Heart left ventricle (tissue), 16 donors: ENCODE measurements at regions of chr1 and their contacts with region 1.

Region 1: DNA sequence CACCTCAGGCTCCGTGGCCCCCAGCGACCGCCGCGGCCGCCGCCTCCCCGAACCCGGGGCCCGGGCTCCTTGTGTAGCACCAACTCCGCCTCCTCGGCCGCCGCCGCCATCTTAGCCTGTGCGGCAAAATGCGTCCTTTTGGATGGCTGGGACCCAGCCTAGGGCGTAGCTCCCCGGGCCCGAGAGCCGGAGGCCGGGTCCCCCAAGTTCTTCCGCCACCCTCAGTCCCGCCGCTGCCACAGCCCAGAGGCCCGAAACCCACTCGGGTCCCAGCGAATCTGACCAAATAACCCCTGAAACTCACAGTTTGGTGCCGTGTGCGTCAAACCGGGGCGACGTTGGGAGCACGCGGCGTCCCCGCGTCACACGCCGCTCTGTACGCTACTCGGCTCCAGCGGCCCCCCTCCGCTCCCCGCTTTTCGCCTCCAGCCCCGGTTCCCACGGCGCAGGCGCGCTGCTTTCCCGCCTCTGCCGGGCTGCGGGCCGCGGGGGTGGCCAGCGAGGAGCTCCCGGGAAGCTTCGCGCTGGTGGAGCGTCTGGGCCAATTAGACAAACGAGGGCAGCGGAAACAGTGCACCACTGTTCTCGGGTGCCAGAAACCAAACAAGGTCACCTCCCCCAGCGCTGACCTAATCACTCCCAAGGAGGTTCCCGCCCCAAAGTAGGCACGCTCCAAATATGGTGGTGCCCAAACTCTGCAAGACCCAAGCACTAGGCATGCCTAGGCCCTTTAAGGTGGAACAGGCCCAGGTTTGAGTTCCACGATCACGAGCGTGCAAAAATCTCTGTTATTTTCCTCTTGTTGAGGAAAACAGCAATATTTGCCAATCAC is at the start of gene ZNF644:
- DNase-seq: peak; percentile 92 to 95 (median 95)
- ATAC-seq: peak; percentile 93 to 97 (median 96)
- H3K4me3 ChIP-seq: peak within 1 kb of the TSS; percentile 66 to 97 (median 88)
- H3K27ac ChIP-seq: peak within 1 kb of the TSS; percentile 95 to 100 (median 100)
- H3K4me1 ChIP-seq: peaks cover 0 to 54% (median 40%) of the 10 kb centered on the region in 12 donors
- H3K27me3 ChIP-seq: no peaks in the 10 kb centered on the region
- CTCF ChIP-seq: no peak
- POLR2A ChIP-seq: peak; percentile 16 to 75
- total RNA-seq, gene ZNF644: 23.1 to 46.6 (median 33.9) TPM

Region 2: DNA sequence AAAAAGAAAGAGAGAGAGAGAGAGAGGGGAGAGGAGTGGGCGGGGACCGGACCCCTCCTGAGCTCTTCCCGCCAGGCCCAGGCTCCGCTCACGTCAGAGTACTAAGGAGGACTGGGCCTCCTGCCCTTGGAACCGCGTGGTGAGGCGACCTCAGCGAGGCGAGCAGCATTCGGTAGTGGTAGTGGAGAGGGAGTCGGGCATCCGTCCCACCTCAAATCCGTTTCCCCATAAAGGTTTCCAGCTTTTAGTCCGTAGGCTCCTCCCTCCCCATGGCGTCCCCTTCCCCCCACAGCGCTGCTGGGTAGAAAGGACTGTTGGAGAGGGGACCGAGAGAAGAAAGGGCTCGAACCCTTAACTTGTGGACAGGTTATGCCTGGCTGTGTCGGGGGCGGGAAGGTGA is 180.4 kb before region 1 on chr1:
- intact Hi-C with region 1: loop called in 1 of 10 experiments (anchors 10 kb)
- DNase-seq: no peak
- ATAC-seq: no peak
- H3K4me3 ChIP-seq: no peak overlapping the region
- H3K27ac ChIP-seq: no peak overlapping the region
- H3K4me1 ChIP-seq: peaks cover 0 to 1% (median under 1%) of the 10 kb centered on the region in 12 donors
- H3K27me3 ChIP-seq: peaks cover 0 to 59% (median 12%) of the 10 kb centered on the region in 9 donors
- CTCF ChIP-seq: no peak
- POLR2A ChIP-seq: no peak

Region 3: GRCh38 chr1:90850898-90851710 is 170.8 kb before region 1 on chr1:
- intact Hi-C with region 1: loop called in 5 of 10 experiments (anchors 5 to 10 kb)
- DNase-seq: peak; percentile 83 to 90 (median 85)
- ATAC-seq: peak; percentile 92 to 100 (median 98)
- H3K4me3 ChIP-seq: peak overlapping the region; percentile 57 to 96 (median 83)
- H3K27ac ChIP-seq: peak overlapping the region in 9 of 12 donors; percentile 2 to 76 (median 60)
- H3K4me1 ChIP-seq: peaks cover 0 to 13% (median 0%) of the 10 kb centered on the region in 12 donors
- H3K27me3 ChIP-seq: peaks cover 0 to 10% (median 0%) of the 10 kb centered on the region in 9 donors
- CTCF ChIP-seq: peak; percentile 60 to 94 (median 88)
- POLR2A ChIP-seq: peak in 1 of 2 donors; percentile 41